Activated B cell treated with CpG ODN at 0.5 μM for 24 hours (primary cell): ENCODE measurements at regions of chr2 and their contacts with region 1.

Region 1: GRCh38 chr2:152930501-152930900 is 212.1 kb downstream of the ARL6IP6 start:
- DNase-seq: no peak
- ATAC-seq: no peak
- H3K4me3 Mint-ChIP-seq: no peak overlapping the region
- H3K27ac Mint-ChIP-seq: no peak overlapping the region
- H3K4me1 Mint-ChIP-seq: no peaks in the 10 kb centered on the region
- H3K27me3 Mint-ChIP-seq: no peaks in the 10 kb centered on the region
- CTCF ChIP-seq: no peak

Region 2: DNA sequence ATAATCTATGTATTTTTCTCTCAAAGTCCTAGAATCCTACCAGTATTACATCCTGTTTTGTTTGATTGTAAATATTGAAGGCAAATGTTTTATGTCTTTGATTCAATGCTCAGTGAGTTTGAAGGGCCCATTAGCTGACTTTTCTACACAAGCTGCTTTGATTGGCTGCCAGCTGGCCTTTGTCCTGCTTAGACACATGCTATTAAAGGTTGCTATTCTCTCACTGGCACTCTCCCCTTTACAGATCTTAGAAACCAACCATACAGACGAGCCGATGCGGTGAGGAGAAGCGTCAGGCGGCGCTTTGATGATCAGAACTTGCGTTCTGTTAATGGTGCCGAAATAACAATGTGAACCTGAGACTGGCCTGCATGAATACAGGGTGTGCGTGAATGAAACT is 282.9 kb before region 1 on chr2:
- CTCF ChIA-PET with region 1: no interaction called
- POLR2A ChIA-PET with region 1: no interaction called
- intact Hi-C with region 1: no loop called
- DNase-seq: no peak
- ATAC-seq: no peak
- H3K4me3 Mint-ChIP-seq: no peak overlapping the region
- H3K27ac Mint-ChIP-seq: peak overlapping the region; percentile 15
- H3K4me1 Mint-ChIP-seq: no peaks in the 10 kb centered on the region
- H3K27me3 Mint-ChIP-seq: no peaks in the 10 kb centered on the region
- CTCF ChIP-seq: no peak

Region 3: GRCh38 chr2:152950126-152950525 is 19.6 kb after region 1 on chr2:
- CTCF ChIA-PET with region 1: no interaction called
- POLR2A ChIA-PET with region 1: no interaction called
- intact Hi-C with region 1: loop called (anchors 2 kb)
- DNase-seq: no peak
- ATAC-seq: no peak
- H3K4me3 Mint-ChIP-seq: no peak overlapping the region
- H3K27ac Mint-ChIP-seq: no peak overlapping the region
- H3K4me1 Mint-ChIP-seq: no peaks in the 10 kb centered on the region
- H3K27me3 Mint-ChIP-seq: no peaks in the 10 kb centered on the region
- CTCF ChIP-seq: no peak